ENCODE measurements at regions of chr19 and their contacts with region 1.

Region 1: DNA sequence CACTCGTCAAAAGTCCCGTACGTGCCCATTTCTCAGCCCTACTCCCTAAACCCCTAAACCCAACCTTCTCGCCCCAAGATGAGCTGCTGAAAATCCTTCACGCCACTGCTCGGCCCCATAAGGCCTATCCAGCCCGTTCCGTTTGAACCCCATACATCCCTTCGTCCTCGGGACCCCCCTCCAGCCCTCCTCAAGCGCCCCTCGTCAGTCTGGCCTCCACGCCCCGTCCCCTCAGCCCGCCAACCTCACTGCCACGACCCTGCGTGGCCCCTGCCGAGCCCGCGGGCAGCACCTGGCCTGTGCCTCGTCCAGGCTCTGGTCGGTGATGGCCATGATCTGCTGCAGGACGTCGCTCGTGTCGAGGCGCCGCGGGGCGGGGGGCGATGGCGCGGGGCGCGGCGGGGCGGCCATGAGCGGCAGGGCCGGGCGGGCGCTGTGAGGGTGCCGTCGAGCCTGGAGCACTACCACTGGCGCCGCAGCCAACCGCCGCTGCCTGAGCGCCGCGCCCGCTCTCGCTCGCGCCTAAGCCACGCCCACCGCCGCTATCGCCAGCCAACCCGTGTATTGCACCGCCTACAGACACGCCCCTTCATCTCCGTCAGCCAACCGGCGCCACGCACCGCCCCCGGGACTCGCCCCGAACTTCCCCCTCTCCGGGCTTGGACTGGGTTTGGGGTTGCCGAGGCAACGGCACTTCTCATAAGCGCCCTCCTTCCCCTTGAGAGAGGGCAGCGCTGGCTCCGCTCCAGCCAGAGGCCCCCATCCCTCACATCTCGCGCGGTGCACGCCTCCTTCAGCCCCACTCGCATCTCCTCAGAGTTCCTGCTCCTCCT is at the start of gene PBX4:
- DNase-seq: peak; percentile 99
- H3K4me3 Mint-ChIP-seq: peak within 1 kb of the TSS; percentile 99
- H3K27ac Mint-ChIP-seq: peak within 1 kb of the TSS; percentile 86
- H3K4me1 Mint-ChIP-seq: peaks cover 49% of the 10 kb centered on the region
- H3K27me3 Mint-ChIP-seq: no peaks in the 10 kb centered on the region
- total RNA-seq, gene PBX4: 49.0 to 55.6 TPM

Region 2: DNA sequence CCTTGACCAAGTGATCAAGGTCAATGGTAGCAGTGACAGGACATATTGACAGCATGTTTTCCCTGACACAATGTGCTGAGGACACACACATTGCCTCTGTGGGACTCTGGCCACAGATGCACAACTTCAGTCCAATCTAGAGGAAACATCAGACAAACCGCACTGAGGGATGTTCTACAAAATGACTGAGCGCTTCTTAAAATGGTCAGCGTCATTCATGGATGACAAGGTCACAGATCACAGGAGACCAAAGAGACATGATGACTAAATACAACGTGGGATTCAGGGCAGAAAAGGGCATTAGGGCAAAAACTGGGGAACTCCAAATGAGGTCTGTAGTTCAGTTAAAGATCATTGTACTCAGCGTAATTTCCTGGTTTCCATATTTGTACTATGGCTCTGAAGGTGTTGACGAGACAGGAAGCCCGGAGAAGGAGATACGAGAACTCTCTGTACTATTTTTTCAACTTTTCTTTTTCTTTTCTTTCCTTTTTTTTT is 20.6 kb before region 1 on chr19:
- CTCF ChIA-PET with region 1: no interaction called
- POLR2A ChIA-PET with region 1: interaction called, 118 read pairs
- DNase-seq: peak; percentile 73
- H3K4me3 Mint-ChIP-seq: peak overlapping the region; percentile 69
- H3K27ac Mint-ChIP-seq: peak overlapping the region; percentile 95
- H3K4me1 Mint-ChIP-seq: peaks cover 81% of the 10 kb centered on the region
- H3K27me3 Mint-ChIP-seq: no peaks in the 10 kb centered on the region

Region 3: DNA sequence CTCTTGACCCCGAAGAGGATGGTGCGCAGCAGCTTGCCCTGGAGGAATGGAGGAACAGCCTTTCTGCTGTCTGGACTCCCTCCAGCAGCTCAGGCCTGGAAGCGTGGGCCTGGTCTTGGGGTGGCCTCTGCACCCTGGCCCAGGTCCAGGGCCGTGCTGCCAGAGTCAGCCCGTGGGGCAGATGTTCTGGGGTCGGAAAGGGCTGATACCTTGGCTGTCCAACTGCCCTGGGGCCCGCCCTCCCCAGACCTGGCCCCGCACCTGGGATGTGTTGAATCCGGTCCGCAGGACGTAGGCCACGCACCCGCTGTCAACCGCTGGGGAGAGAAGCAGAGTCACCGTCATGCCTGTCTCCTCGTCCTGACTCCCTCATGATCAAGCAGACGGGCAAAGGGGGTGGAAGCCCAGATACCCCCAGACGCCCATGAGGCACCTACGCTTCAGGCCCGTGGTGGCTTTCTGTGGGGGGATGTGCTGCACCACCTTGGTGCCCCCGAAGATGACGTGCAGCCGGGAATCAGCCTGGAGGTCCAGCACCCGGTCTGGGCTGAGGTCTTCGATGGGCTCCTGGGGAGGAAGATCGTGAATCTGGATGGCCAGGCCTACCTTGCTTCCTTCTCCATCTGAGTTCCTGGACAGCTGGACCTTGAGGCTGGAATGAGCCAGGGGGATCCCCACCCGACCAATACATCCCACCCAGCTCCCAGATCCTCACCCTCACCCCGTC is 37.3 kb after region 1 on chr19:
- CTCF ChIA-PET with region 1: no interaction called
- POLR2A ChIA-PET with region 1: no interaction called
- DNase-seq: no peak
- H3K4me3 Mint-ChIP-seq: no peak overlapping the region
- H3K27ac Mint-ChIP-seq: no peak overlapping the region
- H3K4me1 Mint-ChIP-seq: peaks cover 3% of the 10 kb centered on the region
- H3K27me3 Mint-ChIP-seq: no peaks in the 10 kb centered on the region

Measured in activated CD4-positive, alpha-beta memory T cell treated with anti-CD3 and anti-CD28 coated beads, Interleukin-2, amount 10 ng/mL, durations not matched to agents 7 days and 5 days (primary cell).